ENCODE measurements at regions of chr10 and their contacts with region 1.

Region 1: DNA sequence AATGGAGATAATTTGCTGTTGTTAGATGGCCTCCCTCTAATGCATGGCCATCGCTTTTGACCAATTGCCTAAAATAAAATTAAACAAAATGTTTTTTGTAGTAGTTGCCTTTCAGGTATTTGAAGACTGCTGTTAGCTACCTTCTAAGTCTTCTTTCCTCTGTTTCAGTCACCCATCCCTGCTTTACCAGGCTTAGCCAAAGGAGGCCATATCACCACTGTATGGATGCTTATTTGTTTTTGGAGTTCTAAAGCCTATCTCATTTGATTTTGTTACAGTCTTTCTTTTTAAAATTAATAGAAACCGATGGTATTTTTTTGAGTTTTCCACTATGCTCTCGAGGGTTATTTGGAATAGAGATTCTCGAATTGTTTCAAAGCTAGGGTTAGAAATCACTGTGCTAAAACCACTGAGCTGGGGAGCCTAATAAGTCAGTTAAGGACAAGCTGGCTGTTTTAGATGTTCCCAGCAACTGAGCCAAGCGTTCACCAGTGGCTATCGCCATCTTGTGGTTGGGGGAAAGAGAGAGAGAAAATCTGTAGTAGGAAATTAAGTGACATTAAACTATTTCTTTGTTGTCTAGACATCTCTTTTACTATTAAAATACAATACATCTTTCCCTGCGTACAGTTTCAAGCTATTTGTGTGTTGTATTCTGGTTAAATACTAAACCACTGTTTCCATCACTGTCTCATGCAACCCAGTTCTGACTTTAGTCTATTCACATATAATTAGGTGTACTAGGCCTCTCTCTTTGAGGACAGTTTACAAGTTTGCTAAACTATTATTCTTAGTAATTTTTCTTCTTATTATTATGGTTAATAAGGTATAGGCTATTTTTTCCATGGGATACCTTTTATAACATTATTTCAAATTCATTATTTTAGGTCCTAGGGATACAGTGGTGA is 52.2 kb downstream of the GPR158 start:
- DNase-seq: peak; percentile 27
- H3K4me3 ChIP-seq: no peak overlapping the region; a peak in 1 of 4 replicates
- H3K27ac ChIP-seq: no peak overlapping the region
- H3K4me1 ChIP-seq: no peaks in the 10 kb centered on the region
- H3K27me3 ChIP-seq: no peaks in the 10 kb centered on the region
- CTCF ChIP-seq: peak; percentile 76
- EP300 ChIP-seq: no peak
- RAD21 ChIP-seq: peak; percentile 82

Region 2: GRCh38 chr10:24974976-24975375 is 252.1 kb before region 1 on chr10:
- CTCF ChIA-PET with region 1: no interaction called
- POLR2A ChIA-PET with region 1: no interaction called
- DNase-seq: no peak
- H3K4me3 ChIP-seq: no peak overlapping the region
- H3K27ac ChIP-seq: no peak overlapping the region
- H3K4me1 ChIP-seq: no peaks in the 10 kb centered on the region
- H3K27me3 ChIP-seq: no peaks in the 10 kb centered on the region
- CTCF ChIP-seq: no peak
- EP300 ChIP-seq: no peak
- RAD21 ChIP-seq: no peak

Region 3: DNA sequence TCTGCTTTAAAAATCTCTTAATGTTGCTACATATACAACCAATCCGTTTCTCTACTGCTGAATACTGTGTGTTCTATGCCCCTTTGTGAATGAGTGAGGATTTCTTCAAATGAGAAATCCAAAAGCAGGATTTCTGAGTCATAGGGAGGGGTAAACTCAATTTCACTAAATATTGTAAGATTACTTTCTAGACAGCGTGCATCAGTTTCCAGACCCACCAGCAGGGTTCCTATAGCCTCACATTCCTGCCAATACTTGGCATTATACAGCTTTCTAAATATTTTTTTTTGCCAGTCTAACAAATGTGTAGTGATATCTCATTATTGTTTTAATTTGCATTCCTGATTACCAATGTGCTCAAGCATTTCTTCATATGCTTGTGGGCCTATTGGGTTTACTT is 16.8 kb before region 1 on chr10:
- CTCF ChIA-PET with region 1: interaction called, 14 read pairs
- POLR2A ChIA-PET with region 1: no interaction called
- DNase-seq: no peak
- H3K4me3 ChIP-seq: no peak overlapping the region
- H3K27ac ChIP-seq: no peak overlapping the region
- H3K4me1 ChIP-seq: no peaks in the 10 kb centered on the region
- H3K27me3 ChIP-seq: no peaks in the 10 kb centered on the region
- CTCF ChIP-seq: no peak
- EP300 ChIP-seq: no peak
- RAD21 ChIP-seq: no peak

Region 4: DNA sequence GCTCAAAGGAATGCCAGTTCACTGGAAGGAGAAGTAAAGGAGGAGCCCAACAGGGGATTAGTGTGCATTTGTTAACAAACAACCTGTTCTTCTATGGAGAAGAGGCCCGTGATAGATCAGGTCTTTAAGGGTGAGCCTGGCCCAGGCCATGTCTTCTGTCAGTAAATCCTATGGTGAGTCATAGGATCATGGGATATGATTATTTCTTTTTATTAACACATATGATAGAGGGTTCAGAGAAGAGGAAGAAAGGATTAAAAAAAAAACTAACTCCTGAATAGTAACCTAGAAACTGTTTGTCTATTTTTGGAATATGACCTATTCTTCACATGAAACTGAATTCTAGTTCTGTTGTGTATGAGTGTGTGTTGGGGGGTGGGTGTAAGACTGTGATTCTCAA is 18.1 kb after region 1 on chr10:
- CTCF ChIA-PET with region 1: interaction called, 12 read pairs
- POLR2A ChIA-PET with region 1: no interaction called
- DNase-seq: no peak
- H3K4me3 ChIP-seq: no peak overlapping the region
- H3K27ac ChIP-seq: no peak overlapping the region
- H3K4me1 ChIP-seq: no peaks in the 10 kb centered on the region
- H3K27me3 ChIP-seq: no peaks in the 10 kb centered on the region
- CTCF ChIP-seq: no peak
- EP300 ChIP-seq: no peak
- RAD21 ChIP-seq: no peak

Region 5: GRCh38 chr10:25582961-25583360 is 355.9 kb after region 1 on chr10:
- CTCF ChIA-PET with region 1: no interaction called
- POLR2A ChIA-PET with region 1: no interaction called
- DNase-seq: no peak
- H3K4me3 ChIP-seq: no peak overlapping the region
- H3K27ac ChIP-seq: no peak overlapping the region
- H3K4me1 ChIP-seq: no peaks in the 10 kb centered on the region
- H3K27me3 ChIP-seq: no peaks in the 10 kb centered on the region
- CTCF ChIP-seq: no peak
- EP300 ChIP-seq: no peak
- RAD21 ChIP-seq: no peak